CD8-positive, alpha-beta T cell (primary cell): ENCODE measurements at regions of chr5 and their contacts with region 1.

Region 1: GRCh38 chr5:177497292-177498033 is at the start of gene PDLIM7:
- DNase-seq: peak; percentile 88 to 97 (median 93)
- ATAC-seq: peak; percentile 88
- H3K4me3 ChIP-seq: peak within 1 kb of the TSS; percentile 64 to 80
- H3K4me3 Mint-ChIP-seq: peak within 1 kb of the TSS; percentile 82
- H3K27ac ChIP-seq: peak within 1 kb of the TSS; percentile 18 to 20
- H3K27ac Mint-ChIP-seq: no peak within 1 kb of the TSS
- H3K4me1 ChIP-seq: peaks cover 27% of the 10 kb centered on the region
- H3K4me1 Mint-ChIP-seq: peaks cover 30% of the 10 kb centered on the region
- H3K27me3 ChIP-seq: no peaks in the 10 kb centered on the region
- H3K27me3 Mint-ChIP-seq: no peaks in the 10 kb centered on the region
- CTCF ChIP-seq: no peak
- total RNA-seq, gene PDLIM7: 6.6 to 7.1 TPM

Region 2: GRCh38 chr5:177194274-177194673 is 303.2 kb before region 1 on chr5:
- CTCF ChIA-PET with region 1: no interaction called
- POLR2A ChIA-PET with region 1: no interaction called
- intact Hi-C with region 1: no loop called
- DNase-seq: no peak
- ATAC-seq: no peak
- H3K4me3 ChIP-seq: no peak overlapping the region
- H3K4me3 Mint-ChIP-seq: no peak overlapping the region
- H3K27ac ChIP-seq: no peak overlapping the region
- H3K27ac Mint-ChIP-seq: no peak overlapping the region
- H3K4me1 ChIP-seq: no peaks in the 10 kb centered on the region
- H3K4me1 Mint-ChIP-seq: peaks cover 7% of the 10 kb centered on the region
- H3K27me3 ChIP-seq: no peaks in the 10 kb centered on the region
- H3K27me3 Mint-ChIP-seq: no peaks in the 10 kb centered on the region
- CTCF ChIP-seq: no peak

Region 3: DNA sequence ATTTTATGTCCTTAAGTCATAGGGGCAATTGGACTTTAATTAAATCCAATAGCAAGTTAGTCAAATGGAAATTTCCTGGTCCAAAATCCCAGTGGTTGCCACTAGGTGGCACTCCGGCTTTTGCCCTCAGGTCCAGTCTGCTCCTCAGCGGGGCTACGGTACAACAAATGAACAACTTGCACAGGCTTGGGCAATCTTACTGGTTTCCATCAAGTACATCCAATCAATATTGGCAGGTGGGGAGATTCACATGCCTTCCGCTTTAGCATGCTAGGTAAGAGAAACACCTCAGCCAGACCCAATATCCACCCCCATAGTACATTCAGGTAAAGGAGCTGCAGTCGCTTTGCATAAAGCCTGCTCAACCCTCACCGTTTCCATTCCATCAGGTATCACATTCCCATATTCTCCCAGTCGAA is 179.5 kb before region 1 on chr5:
- CTCF ChIA-PET with region 1: interaction called, 12 read pairs
- POLR2A ChIA-PET with region 1: no interaction called
- intact Hi-C with region 1: loop called (anchors 1 kb)
- DNase-seq: peak; percentile 52 to 85 (median 75)
- ATAC-seq: peak; percentile 81
- H3K4me3 ChIP-seq: no peak overlapping the region
- H3K4me3 Mint-ChIP-seq: no peak overlapping the region
- H3K27ac ChIP-seq: no peak overlapping the region
- H3K27ac Mint-ChIP-seq: no peak overlapping the region
- H3K4me1 ChIP-seq: peaks cover 10% of the 10 kb centered on the region
- H3K4me1 Mint-ChIP-seq: peaks cover 14% of the 10 kb centered on the region
- H3K27me3 ChIP-seq: no peaks in the 10 kb centered on the region
- H3K27me3 Mint-ChIP-seq: no peaks in the 10 kb centered on the region
- CTCF ChIP-seq: peak; percentile 90

Region 4: DNA sequence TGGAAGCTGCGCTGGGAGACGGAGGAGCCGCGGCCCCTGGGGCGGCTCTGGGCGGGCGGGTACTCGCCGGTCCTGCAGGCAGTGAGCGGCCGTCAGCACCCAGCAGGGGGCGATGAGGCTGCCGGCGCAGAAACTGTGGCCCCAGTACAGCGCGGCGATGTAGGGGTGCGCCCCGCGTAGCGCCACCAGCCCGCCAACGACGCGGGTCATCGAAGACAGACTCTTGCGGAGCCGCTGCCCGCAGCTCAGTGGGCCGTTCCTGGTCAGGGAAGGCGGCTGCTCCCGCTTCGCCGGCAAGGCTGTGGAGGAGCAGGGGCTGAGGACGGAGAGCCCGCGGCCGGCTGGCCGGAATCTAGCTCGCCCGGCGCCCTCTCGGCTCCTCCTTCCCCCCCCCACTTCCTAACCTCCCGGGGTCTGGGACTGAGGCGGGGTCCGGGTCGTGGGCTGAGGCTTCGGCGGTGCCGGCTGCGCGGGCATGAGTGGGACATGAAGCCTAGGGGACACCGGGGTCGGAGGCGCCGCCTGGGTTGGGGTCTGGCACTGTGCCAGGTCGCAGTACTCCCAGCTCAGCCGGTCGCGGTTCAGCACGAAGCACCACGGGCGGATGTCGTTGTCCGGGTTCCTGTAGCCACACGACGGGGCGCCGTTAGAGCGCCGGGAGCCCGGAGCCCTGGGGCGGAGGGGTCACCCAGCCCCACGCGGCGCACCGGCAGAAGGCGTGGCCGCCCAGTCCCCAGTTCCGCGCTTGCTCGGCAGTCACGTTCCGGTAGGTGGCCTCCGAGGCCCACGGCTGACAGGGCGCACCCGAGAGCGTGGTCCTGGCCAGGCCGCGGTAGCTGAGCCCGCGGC is 93.4 kb before region 1 on chr5:
- CTCF ChIA-PET with region 1: interaction called, 121 read pairs
- POLR2A ChIA-PET with region 1: interaction called, 3 read pairs
- intact Hi-C with region 1: loop called (anchors 1 kb)
- DNase-seq: peak; percentile 74 to 94 (median 85)
- ATAC-seq: peak; percentile 73
- H3K4me3 ChIP-seq: peak overlapping the region; percentile 52 to 72
- H3K4me3 Mint-ChIP-seq: peak overlapping the region; percentile 79
- H3K27ac ChIP-seq: peak overlapping the region in 1 of 2 experiments; percentile 59
- H3K27ac Mint-ChIP-seq: no peak overlapping the region
- H3K4me1 ChIP-seq: peaks cover 44% of the 10 kb centered on the region
- H3K4me1 Mint-ChIP-seq: peaks cover 38% of the 10 kb centered on the region
- H3K27me3 ChIP-seq: peaks cover 0 to 2% of the 10 kb centered on the region in 2 experiments
- H3K27me3 Mint-ChIP-seq: no peaks in the 10 kb centered on the region
- CTCF ChIP-seq: peak; percentile 52

Region 5: DNA sequence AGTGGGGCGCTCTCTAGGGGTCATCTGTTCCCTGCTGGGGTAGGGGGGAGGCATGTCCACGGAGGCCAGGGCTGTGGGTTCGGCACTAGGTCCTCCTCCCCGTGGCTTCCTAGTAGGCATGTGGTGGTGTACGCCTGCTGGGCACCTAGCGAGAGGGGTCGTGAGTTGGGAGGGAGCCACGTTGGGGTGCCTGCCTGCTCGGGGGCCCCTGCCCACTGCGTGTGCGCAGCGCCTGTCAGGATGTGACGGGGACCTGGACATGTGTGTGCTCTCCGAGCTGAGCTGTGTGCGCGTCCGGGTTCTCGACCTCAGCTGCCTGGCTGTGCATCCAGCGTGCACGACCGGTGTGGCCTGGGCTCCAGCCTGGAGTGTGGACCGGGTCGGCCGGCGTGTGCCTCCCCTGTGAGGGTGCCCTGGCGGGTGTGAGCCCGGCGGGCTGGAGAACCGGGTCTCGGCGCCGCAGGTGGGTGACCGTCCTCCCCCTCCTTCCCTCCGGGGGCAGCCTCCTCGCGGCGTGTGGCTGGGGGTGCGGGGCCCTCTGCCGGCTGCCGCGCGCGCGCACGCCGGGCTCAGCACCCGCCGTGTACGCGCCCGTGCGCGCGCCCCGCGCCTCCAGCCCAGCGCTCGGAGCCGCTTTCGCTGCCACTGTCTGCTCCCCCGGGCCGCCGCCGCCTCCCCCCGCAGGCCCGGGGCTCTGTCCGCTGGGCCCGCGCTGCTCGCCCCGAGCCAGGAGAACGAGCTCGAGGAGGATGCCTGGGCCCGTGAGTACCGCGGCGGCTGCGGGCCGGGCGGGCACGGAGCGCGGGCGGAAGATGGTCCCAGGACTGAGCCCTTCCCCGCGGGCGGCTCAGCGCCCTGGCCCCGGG is 51.0 kb before region 1 on chr5 and contains the start of gene PRR7:
- CTCF ChIA-PET with region 1: interaction called, 13 read pairs
- POLR2A ChIA-PET with region 1: interaction called, 3 read pairs
- intact Hi-C with region 1: no loop called
- DNase-seq: peak; percentile 51 to 93 (median 75)
- ATAC-seq: peak; percentile 54
- H3K4me3 ChIP-seq: peak within 1 kb of the TSS; percentile 56 to 61
- H3K4me3 Mint-ChIP-seq: peak within 1 kb of the TSS; percentile 79
- H3K27ac ChIP-seq: peak within 1 kb of the TSS; percentile 61 to 84
- H3K27ac Mint-ChIP-seq: peak within 1 kb of the TSS; percentile 95
- H3K4me1 ChIP-seq: peaks cover 33% of the 10 kb centered on the region
- H3K4me1 Mint-ChIP-seq: peaks cover 44% of the 10 kb centered on the region
- H3K27me3 ChIP-seq: no peaks in the 10 kb centered on the region
- H3K27me3 Mint-ChIP-seq: no peaks in the 10 kb centered on the region
- CTCF ChIP-seq: no peak
- total RNA-seq, gene PRR7: 21.0 TPM

Region 6: DNA sequence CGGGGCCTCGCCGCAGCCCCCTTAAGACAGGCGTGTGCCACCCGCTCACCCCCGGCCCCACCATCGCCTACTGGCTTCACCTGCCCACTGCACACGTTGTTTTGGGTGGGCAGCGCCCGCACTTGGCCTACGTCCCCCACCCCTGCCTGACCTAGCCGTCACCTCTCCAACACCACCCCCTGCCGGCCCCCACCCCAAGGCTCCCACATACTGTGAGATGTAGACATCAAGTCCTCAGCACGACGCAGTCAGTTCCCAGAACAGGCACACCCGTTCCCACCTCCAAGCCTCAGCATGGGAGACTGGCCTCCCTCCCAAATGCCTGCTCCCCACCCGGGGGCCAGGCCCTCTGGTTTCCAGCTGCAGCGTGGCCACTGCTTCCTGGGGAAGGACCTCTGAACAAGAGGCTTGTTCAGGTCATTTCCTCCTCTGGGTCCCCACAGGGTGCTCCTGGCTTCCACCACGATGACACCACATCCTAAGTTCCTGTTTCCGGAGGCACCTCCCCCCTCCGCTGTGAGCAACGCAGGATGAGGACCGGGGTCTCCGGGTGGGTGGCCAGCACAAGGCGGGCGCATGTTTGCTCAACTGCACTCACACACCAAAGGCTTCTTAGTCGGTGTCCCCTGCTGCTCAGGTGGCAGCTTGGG is 35.3 kb before region 1 on chr5:
- CTCF ChIA-PET with region 1: interaction called, 79 read pairs
- POLR2A ChIA-PET with region 1: interaction called, 4 read pairs
- intact Hi-C with region 1: no loop called
- DNase-seq: peak in 1 of 9 experiments; percentile 28
- ATAC-seq: no peak
- H3K4me3 ChIP-seq: no peak overlapping the region
- H3K4me3 Mint-ChIP-seq: no peak overlapping the region
- H3K27ac ChIP-seq: no peak overlapping the region
- H3K27ac Mint-ChIP-seq: no peak overlapping the region
- H3K4me1 ChIP-seq: peaks cover 8% of the 10 kb centered on the region
- H3K4me1 Mint-ChIP-seq: peaks cover 14% of the 10 kb centered on the region
- H3K27me3 ChIP-seq: no peaks in the 10 kb centered on the region
- H3K27me3 Mint-ChIP-seq: no peaks in the 10 kb centered on the region
- CTCF ChIP-seq: no peak

Region 7: GRCh38 chr5:177478711-177479646 is 18.5 kb before region 1 on chr5:
- CTCF ChIA-PET with region 1: interaction called, 33 read pairs
- POLR2A ChIA-PET with region 1: no interaction called
- intact Hi-C with region 1: no loop called
- DNase-seq: peak in 5 of 9 experiments; percentile 32 to 75 (median 58)
- ATAC-seq: peak; percentile 87
- H3K4me3 ChIP-seq: no peak overlapping the region
- H3K4me3 Mint-ChIP-seq: peak overlapping the region; percentile 37
- H3K27ac ChIP-seq: peak overlapping the region; percentile 21 to 68
- H3K27ac Mint-ChIP-seq: peak overlapping the region; percentile 92
- H3K4me1 ChIP-seq: peaks cover 35% of the 10 kb centered on the region
- H3K4me1 Mint-ChIP-seq: peaks cover 45% of the 10 kb centered on the region
- H3K27me3 ChIP-seq: no peaks in the 10 kb centered on the region
- H3K27me3 Mint-ChIP-seq: no peaks in the 10 kb centered on the region
- CTCF ChIP-seq: no peak

Region 8: DNA sequence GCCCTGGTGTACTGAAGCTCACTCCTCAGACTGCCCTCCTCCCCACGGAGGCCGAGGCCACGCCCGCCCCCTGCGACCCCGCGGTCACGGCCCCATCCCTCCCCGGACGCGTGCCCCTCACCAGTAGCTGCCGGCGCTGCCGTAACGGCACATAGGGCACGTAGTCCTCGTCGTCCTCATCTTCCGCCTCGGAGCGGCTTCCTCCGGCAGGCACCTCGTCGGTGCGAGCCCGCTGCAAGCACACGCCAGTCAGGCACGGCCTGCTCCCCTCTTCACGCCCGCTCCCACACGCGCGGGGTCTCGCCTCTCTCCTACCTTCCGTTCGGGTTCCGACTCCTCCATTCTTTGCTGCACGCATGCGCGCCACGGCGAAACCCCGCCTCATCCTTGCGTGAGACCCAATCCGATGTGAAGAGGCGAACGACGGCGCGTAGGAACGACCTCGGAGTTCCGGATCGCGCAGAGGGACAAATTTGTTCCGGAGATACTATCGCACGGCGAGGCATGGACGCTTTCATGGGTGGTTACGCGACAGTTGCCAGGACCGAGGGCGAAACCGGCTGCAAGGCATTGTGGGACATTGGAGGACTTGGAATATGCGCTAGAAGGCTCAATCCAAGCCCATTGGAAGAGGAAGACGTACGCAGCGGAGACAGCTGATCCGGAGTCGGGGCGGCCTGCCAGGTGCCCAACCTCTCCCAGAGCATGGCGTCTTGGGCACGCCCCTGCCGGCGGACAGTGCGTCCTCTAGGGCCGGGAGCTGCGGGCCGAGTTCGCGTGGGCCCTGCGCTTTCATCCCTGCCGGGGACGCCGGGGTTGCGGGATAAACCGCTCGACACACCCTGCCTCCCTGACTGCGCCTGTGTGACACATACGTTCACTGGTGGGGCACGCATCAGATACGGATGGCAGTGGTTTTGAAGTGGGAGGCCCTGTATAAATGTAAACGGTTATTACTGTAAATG is 19.4 kb after region 1 on chr5 and contains the start of gene DDX41:
- CTCF ChIA-PET with region 1: interaction called, 29 read pairs
- POLR2A ChIA-PET with region 1: no interaction called
- intact Hi-C with region 1: loop called (anchors 1 to 2 kb)
- DNase-seq: peak; percentile 88 to 98 (median 95)
- ATAC-seq: peak; percentile 88
- H3K4me3 ChIP-seq: peak within 1 kb of the TSS; percentile 95
- H3K4me3 Mint-ChIP-seq: peak within 1 kb of the TSS; percentile 94
- H3K27ac ChIP-seq: peak within 1 kb of the TSS; percentile 61 to 73
- H3K27ac Mint-ChIP-seq: peak within 1 kb of the TSS; percentile 93
- H3K4me1 ChIP-seq: peaks cover 31% of the 10 kb centered on the region
- H3K4me1 Mint-ChIP-seq: peaks cover 46% of the 10 kb centered on the region
- H3K27me3 ChIP-seq: no peaks in the 10 kb centered on the region
- H3K27me3 Mint-ChIP-seq: no peaks in the 10 kb centered on the region
- CTCF ChIP-seq: no peak
- total RNA-seq, gene DDX41: 66.8 to 71.0 TPM

Region 9: DNA sequence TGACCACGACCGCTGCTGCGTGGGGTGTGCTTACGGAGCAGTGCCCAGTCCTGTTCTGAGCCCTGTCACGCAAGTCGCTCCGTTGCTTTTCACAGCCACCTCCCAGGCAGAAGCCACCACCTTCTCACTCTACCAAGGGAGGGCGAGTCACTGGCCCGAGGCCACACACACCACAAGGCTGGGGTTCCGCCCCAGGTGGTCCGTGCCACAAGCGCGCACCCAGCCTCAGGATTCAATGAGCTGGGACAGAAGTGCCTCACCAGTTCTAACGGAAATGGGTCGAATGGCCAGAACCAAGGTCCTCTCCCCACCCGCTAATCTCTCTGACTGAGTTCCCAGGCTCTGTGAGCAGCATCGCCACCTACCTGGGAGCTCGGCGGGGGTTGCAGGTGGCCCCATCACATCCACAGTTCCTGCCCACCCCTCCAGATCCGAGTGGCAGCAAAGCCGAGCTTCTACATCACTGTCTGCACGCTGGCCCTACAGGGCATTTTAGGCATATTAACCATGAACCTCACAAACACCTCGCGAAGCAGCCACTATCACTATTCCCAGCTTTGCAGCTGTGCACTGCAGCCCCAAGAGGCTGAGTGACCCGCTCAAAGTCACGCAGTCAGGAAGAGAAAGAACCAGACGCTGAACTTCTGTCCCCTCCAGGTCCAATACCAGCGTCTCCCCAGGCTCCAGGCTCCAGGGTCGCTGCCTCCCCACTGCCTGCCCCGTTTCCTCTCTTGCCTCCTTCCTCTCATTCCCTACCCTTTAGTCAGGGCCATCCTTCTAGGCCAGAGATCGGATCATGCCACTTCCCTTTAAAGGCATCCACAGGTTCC is 827.2 kb after region 1 on chr5:
- CTCF ChIA-PET with region 1: no interaction called
- POLR2A ChIA-PET with region 1: no interaction called
- intact Hi-C with region 1: no loop called
- DNase-seq: no peak
- ATAC-seq: no peak
- H3K4me3 ChIP-seq: no peak overlapping the region
- H3K4me3 Mint-ChIP-seq: no peak overlapping the region
- H3K27ac ChIP-seq: no peak overlapping the region
- H3K27ac Mint-ChIP-seq: no peak overlapping the region
- H3K4me1 ChIP-seq: no peaks in the 10 kb centered on the region
- H3K4me1 Mint-ChIP-seq: no peaks in the 10 kb centered on the region
- H3K27me3 ChIP-seq: no peaks in the 10 kb centered on the region
- H3K27me3 Mint-ChIP-seq: peaks cover 2% of the 10 kb centered on the region
- CTCF ChIP-seq: no peak

Region 10: DNA sequence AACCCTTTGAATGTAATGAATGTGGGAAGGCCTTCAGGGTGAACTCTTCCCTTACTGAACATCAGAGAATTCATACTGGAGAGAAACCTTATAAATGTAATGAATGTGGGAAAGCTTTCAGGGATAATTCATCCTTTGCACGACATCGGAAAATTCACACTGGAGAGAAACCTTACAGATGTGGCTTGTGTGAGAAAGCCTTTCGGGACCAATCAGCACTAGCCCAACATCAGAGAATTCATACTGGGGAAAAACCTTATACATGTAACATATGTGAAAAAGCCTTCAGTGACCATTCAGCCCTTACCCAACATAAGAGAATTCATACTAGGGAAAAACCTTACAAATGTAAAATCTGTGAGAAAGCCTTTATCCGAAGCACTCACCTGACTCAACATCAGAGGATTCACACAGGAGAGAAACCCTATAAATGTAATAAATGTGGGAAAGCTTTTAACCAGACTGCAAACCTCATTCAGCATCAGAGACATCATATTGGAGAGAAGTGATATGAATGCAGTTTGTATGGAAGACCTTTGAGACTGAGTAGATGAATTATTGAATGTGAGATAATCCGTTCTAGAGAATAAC is 1468.1 kb after region 1 on chr5:
- CTCF ChIA-PET with region 1: no interaction called
- POLR2A ChIA-PET with region 1: no interaction called
- intact Hi-C with region 1: no loop called
- DNase-seq: no peak
- ATAC-seq: no peak
- H3K4me3 ChIP-seq: no peak overlapping the region
- H3K4me3 Mint-ChIP-seq: no peak overlapping the region
- H3K27ac ChIP-seq: no peak overlapping the region
- H3K27ac Mint-ChIP-seq: no peak overlapping the region
- H3K4me1 ChIP-seq: no peaks in the 10 kb centered on the region
- H3K4me1 Mint-ChIP-seq: no peaks in the 10 kb centered on the region
- H3K27me3 ChIP-seq: no peaks in the 10 kb centered on the region
- H3K27me3 Mint-ChIP-seq: no peaks in the 10 kb centered on the region
- CTCF ChIP-seq: no peak